CD8-positive, alpha-beta T cell (primary cell): ENCODE measurements at regions of chr15 and their contacts with region 1.

Region 1: GRCh38 chr15:42608110-42608531 is 32.7 kb downstream of the STARD9 start:
- DNase-seq: peak; percentile 6 to 76 (median 46)
- ATAC-seq: peak; percentile 60
- H3K4me3 ChIP-seq: no peak overlapping the region
- H3K4me3 Mint-ChIP-seq: peak overlapping the region; percentile 71
- H3K27ac ChIP-seq: peak overlapping the region in 1 of 2 experiments; percentile 25
- H3K27ac Mint-ChIP-seq: peak overlapping the region; percentile 68
- H3K4me1 ChIP-seq: peaks cover 43% of the 10 kb centered on the region
- H3K4me1 Mint-ChIP-seq: peaks cover 53% of the 10 kb centered on the region
- H3K27me3 ChIP-seq: no peaks in the 10 kb centered on the region
- H3K27me3 Mint-ChIP-seq: no peaks in the 10 kb centered on the region
- CTCF ChIP-seq: no peak

Region 2: DNA sequence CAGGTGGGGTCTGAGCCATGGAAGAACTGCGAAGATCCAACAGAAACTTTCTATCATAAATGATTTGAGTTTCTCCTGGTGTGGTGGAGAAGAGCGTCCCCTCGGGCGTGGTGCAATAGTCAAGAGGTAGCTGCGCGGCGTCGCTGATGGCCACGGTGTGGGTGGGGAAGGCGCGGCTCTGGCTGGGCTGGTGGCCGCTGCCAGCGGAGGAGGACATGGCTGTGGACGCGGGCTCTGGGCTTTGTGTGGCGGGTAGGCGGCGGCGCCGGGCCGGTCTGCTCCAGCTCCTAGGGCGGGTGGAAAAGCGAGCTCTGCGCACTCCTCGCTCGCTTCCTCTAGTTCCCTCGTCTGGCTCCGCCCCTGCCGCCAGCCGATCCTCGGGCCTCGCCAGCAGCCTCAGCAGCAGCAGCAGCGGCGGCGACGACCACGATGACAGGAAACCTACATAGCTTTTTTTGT is 26.8 kb before region 1 on chr15:
- CTCF ChIA-PET with region 1: interaction called, 4 read pairs
- POLR2A ChIA-PET with region 1: interaction called, 15 read pairs
- intact Hi-C with region 1: loop called (anchors 1 to 2 kb)
- DNase-seq: peak; percentile 57 to 89 (median 83)
- ATAC-seq: peak; percentile 99
- H3K4me3 ChIP-seq: peak overlapping the region; percentile 56 to 82
- H3K4me3 Mint-ChIP-seq: peak overlapping the region; percentile 87
- H3K27ac ChIP-seq: peak overlapping the region; percentile 77 to 84
- H3K27ac Mint-ChIP-seq: peak overlapping the region; percentile 93
- H3K4me1 ChIP-seq: peaks cover 20% of the 10 kb centered on the region
- H3K4me1 Mint-ChIP-seq: peaks cover 48% of the 10 kb centered on the region
- H3K27me3 ChIP-seq: no peaks in the 10 kb centered on the region
- H3K27me3 Mint-ChIP-seq: no peaks in the 10 kb centered on the region
- CTCF ChIP-seq: no peak

Region 3: DNA sequence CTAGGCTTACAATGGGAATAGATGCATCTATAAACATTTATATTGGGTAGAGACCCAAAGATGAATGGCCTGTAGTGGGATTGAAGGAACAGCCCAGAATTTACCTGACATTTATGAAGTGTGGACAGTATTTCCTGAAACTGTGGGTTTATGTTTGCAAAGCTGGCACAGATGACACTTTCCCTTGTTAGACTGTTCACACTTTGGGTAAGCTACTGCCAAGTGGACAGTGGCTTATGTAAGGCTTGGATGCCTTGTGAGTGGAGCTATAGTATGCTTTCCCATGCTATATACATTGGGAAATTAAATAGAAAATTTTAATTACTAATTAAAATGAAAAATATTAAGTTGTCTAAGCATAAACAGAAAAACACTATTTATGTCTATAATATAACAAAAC is 15.8 kb after region 1 on chr15:
- CTCF ChIA-PET with region 1: interaction called, 3 read pairs
- POLR2A ChIA-PET with region 1: interaction called, 6 read pairs
- intact Hi-C with region 1: loop called in 1 of 2 experiments (anchors 2 kb)
- DNase-seq: no peak
- ATAC-seq: no peak
- H3K4me3 ChIP-seq: no peak overlapping the region
- H3K4me3 Mint-ChIP-seq: no peak overlapping the region
- H3K27ac ChIP-seq: no peak overlapping the region
- H3K27ac Mint-ChIP-seq: no peak overlapping the region
- H3K4me1 ChIP-seq: no peaks in the 10 kb centered on the region
- H3K4me1 Mint-ChIP-seq: peaks cover 3% of the 10 kb centered on the region
- H3K27me3 ChIP-seq: no peaks in the 10 kb centered on the region
- H3K27me3 Mint-ChIP-seq: no peaks in the 10 kb centered on the region
- CTCF ChIP-seq: no peak

Region 4: DNA sequence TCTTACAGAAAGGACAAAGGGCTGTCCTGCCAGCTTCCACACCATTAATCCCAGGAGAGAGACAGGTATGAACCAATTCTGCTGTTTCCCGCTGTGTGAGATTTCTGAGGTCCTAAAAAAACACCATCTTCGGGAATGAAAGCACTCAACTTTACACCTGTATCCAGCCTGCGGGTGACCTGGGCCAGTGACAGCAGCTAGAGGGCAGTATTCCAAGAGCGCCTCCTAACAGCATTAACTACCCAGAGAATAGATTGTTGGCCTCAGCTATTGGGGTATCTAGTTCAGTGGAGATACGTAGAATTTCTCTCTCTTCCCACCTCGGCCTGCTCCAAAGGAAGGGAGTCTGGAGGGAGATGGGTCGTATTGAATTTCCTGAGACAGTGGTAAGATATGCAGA is 1273.8 kb after region 1 on chr15:
- CTCF ChIA-PET with region 1: no interaction called
- POLR2A ChIA-PET with region 1: no interaction called
- intact Hi-C with region 1: no loop called
- DNase-seq: no peak
- ATAC-seq: no peak
- H3K4me3 ChIP-seq: no peak overlapping the region
- H3K4me3 Mint-ChIP-seq: no peak overlapping the region
- H3K27ac ChIP-seq: no peak overlapping the region
- H3K27ac Mint-ChIP-seq: no peak overlapping the region
- H3K4me1 ChIP-seq: no peaks in the 10 kb centered on the region
- H3K4me1 Mint-ChIP-seq: no peaks in the 10 kb centered on the region
- H3K27me3 ChIP-seq: no peaks in the 10 kb centered on the region
- H3K27me3 Mint-ChIP-seq: no peaks in the 10 kb centered on the region
- CTCF ChIP-seq: no peak